Psoas muscle (tissue), 8 donors: ENCODE measurements at regions of chr1 and their contacts with region 1.

Region 1: GRCh38 chr1:17502326-17502778 is 37.1 kb upstream of the ARHGEF10L start:
- DNase-seq: peak; percentile 90 to 95
- ATAC-seq: peak; percentile 97 to 99 (median 98)
- H3K4me3 ChIP-seq: no peak overlapping the region
- H3K27ac ChIP-seq: peak overlapping the region; percentile 53
- H3K4me1 ChIP-seq: peaks cover 7% of the 10 kb centered on the region
- H3K27me3 ChIP-seq: no peaks in the 10 kb centered on the region
- CTCF ChIP-seq: peak; percentile 91

Region 2: GRCh38 chr1:17581389-17582123 is 79.2 kb after region 1 on chr1:
- intact Hi-C with region 1: no loop called
- DNase-seq: no peak
- ATAC-seq: no peak
- H3K4me3 ChIP-seq: no peak overlapping the region
- H3K27ac ChIP-seq: no peak overlapping the region
- H3K4me1 ChIP-seq: peaks cover 9% of the 10 kb centered on the region
- H3K27me3 ChIP-seq: no peaks in the 10 kb centered on the region
- CTCF ChIP-seq: no peak

Region 3: GRCh38 chr1:17606826-17607440 is 104.6 kb after region 1 on chr1:
- intact Hi-C with region 1: loop called (anchors 1 to 2 kb)
- DNase-seq: peak; percentile 78 to 87
- ATAC-seq: peak; percentile 62 to 88 (median 74)
- H3K4me3 ChIP-seq: no peak overlapping the region
- H3K27ac ChIP-seq: no peak overlapping the region
- H3K4me1 ChIP-seq: peaks cover 6% of the 10 kb centered on the region
- H3K27me3 ChIP-seq: no peaks in the 10 kb centered on the region
- CTCF ChIP-seq: peak; percentile 93